Left ventricle myocardium inferior (tissue), 1 donor: ENCODE measurements at regions of chr18 and their contacts with region 1.

Region 1: DNA sequence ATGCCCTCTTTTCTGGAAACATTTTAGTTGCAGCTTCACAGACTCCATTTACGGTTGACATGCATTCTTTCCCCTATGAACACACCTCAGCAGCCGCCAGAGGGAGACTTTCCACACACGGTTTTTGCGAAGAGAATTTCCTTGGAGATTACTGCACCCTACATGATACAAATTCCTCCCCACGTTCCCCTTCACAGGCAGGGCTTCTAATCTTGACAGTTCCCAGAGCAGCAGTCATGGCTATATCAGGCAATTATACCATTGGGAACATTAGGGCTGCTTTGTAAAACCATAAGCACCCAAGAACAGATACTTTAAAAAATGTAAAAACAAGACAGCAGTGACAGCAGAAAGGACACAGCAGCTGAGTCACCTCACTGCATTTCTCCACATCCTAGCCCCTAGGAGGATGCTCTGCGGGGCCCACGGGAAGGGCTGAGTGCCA is 253.8 kb downstream of the TGIF1 start:
- DNase-seq: peak; percentile 44
- H3K4me3 ChIP-seq: no peak overlapping the region
- H3K27ac ChIP-seq: no peak overlapping the region
- H3K4me1 ChIP-seq: peaks cover 17% of the 10 kb centered on the region
- H3K27me3 ChIP-seq: no peaks in the 10 kb centered on the region
- CTCF ChIP-seq: peak; percentile 73

Region 2: GRCh38 chr18:3832025-3832638 is 128.4 kb after region 1 on chr18:
- intact Hi-C with region 1: no loop called
- DNase-seq: no peak
- H3K4me3 ChIP-seq: no peak overlapping the region
- H3K27ac ChIP-seq: no peak overlapping the region
- H3K4me1 ChIP-seq: no peaks in the 10 kb centered on the region
- H3K27me3 ChIP-seq: peaks cover 10% of the 10 kb centered on the region
- CTCF ChIP-seq: no peak

Region 3: DNA sequence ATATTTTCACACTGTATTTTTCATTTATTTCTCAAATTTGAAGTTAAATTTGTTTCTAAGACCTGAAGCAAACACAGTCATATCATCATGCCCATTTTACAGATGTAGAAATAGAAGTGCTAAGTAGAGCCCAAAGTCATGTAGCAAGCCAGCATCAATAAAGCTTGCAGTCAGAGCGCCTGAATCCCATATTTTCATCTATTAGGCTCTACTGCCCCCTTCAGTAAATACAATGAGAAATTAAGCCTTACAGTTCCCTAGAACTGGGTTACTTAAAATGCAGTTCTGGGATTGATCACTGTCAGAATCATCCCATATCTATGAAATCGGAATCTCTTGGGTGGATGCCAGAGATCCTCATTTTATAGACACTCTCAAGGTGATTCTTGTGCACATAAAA is 166.1 kb after region 1 on chr18:
- intact Hi-C with region 1: loop called (anchors 5 kb)
- DNase-seq: no peak
- H3K4me3 ChIP-seq: no peak overlapping the region
- H3K27ac ChIP-seq: no peak overlapping the region
- H3K4me1 ChIP-seq: no peaks in the 10 kb centered on the region
- H3K27me3 ChIP-seq: no peaks in the 10 kb centered on the region
- CTCF ChIP-seq: peak; percentile 56

Region 4: GRCh38 chr18:3983351-3983969 is 279.7 kb after region 1 on chr18:
- intact Hi-C with region 1: no loop called
- DNase-seq: no peak
- H3K4me3 ChIP-seq: no peak overlapping the region
- H3K27ac ChIP-seq: no peak overlapping the region
- H3K4me1 ChIP-seq: no peaks in the 10 kb centered on the region
- H3K27me3 ChIP-seq: no peaks in the 10 kb centered on the region
- CTCF ChIP-seq: no peak

Region 5: GRCh38 chr18:4004183-4004829 is 300.6 kb after region 1 on chr18:
- intact Hi-C with region 1: loop called (anchors 10 kb)
- DNase-seq: no peak
- H3K4me3 ChIP-seq: no peak overlapping the region
- H3K27ac ChIP-seq: no peak overlapping the region
- H3K4me1 ChIP-seq: no peaks in the 10 kb centered on the region
- H3K27me3 ChIP-seq: no peaks in the 10 kb centered on the region
- CTCF ChIP-seq: no peak

Region 6: GRCh38 chr18:4068552-4069158 is 364.9 kb after region 1 on chr18:
- intact Hi-C with region 1: loop called (anchors 10 kb)
- DNase-seq: no peak
- H3K4me3 ChIP-seq: no peak overlapping the region
- H3K27ac ChIP-seq: no peak overlapping the region
- H3K4me1 ChIP-seq: no peaks in the 10 kb centered on the region
- H3K27me3 ChIP-seq: peaks cover 7% of the 10 kb centered on the region
- CTCF ChIP-seq: peak; percentile 79